Heart left ventricle (tissue), 16 donors: ENCODE measurements at regions of chr17 and their contacts with region 1.

Region 1: DNA sequence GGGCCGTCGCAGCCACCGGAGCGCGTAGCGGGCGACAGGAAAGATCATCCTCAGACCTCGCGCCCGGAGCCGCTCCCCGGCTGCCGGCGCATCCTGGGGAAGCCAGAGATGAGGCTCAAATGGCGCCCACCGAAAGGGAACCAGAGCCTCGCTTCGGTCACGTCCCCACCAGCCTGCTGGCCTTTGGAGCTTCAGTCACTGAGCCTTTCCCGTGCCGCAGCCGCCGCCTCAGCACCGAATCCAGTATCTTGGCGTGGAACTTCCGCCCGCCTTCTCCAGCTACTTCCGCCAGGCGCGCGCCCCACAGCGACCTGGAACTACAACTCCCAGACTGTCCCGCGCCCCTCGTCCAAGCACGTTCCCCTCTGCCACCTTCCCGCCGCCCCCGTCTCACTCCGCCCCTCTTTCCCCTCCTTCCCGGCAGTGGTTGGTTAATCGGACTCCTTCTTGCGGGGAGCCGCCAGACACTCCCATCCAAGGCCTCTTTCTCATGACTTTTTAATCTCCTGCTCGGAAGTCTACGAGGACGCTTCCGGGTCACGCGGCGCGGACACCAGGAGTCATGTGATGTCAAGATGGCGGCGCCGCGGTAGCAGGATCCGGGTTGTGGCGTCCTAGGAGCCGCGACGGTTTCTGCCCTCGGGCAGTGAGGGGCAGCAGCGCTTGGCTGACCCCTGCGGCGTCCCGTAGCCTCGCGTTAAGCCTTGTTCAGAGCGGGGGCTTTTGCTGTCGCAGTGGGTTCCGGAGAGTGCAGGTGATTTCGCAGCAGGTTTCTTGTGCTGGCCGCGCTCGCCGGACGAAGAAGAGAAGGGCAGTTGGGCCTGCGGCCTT is at the starts of genes SMCR8 and TOP3A:
- DNase-seq: peak; percentile 97 to 98 (median 98)
- ATAC-seq: peak; percentile 98
- H3K4me3 ChIP-seq: peak within 1 kb of the TSS; percentile 54 to 96 (median 87)
- H3K27ac ChIP-seq: peak within 1 kb of the TSS; percentile 26 to 95 (median 86)
- H3K4me1 ChIP-seq: peaks cover 11 to 73% (median 61%) of the 10 kb centered on the region in 12 donors
- H3K27me3 ChIP-seq: no peaks in the 10 kb centered on the region
- CTCF ChIP-seq: peak in 1 of 12 donors; percentile 6
- POLR2A ChIP-seq: peak in 1 of 2 donors; percentile 34
- total RNA-seq, gene SMCR8: 9.7 to 17.6 (median 13.1) TPM
- total RNA-seq, gene TOP3A: 9.4 to 26.1 (median 12.8) TPM

Region 2: DNA sequence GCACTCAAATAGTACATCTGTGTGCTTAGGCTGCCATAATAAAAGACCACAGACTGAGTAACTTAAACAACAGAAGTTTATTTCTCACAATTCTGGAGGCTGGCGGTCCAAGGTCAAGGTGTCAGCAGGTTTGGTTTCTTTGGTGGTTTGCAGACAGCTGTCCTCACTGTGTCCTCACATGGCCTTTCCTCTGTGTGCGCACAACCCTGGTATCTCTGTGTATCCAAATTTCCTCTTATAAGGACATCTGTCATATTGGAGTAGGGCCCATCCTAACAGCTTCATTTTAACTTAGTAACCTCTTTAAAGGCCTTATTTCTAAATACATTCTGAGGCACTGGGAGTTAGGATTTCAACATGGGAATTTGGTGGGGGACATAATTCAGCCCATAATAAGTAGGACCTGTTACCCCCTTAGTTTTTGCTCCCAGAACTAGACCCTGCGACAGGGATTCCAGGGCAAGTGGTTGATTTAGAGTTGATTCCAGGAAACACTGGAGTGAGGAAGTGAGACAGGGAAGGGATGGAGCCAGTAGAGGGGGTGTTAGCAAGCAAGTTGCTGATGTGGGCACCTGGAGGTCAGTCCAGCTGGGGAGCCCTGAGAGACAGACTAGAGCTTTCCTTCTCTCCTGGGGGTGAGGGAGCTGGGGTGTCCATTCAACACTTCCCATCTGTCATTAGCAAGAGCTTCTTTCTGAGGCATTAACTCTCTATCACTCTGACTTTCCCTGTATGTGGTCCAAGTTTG is 142.2 kb before region 1 on chr17:
- intact Hi-C with region 1: no loop called
- DNase-seq: no peak
- ATAC-seq: peak in 2 of 4 donors; percentile 61 to 71
- H3K4me3 ChIP-seq: no peak overlapping the region
- H3K27ac ChIP-seq: peak overlapping the region in 3 of 12 donors; percentile 8 to 46 (median 14)
- H3K4me1 ChIP-seq: peaks cover 0 to 7% (median 0%) of the 10 kb centered on the region in 12 donors
- H3K27me3 ChIP-seq: no peaks in the 10 kb centered on the region
- CTCF ChIP-seq: no peak
- POLR2A ChIP-seq: no peak

Region 3: DNA sequence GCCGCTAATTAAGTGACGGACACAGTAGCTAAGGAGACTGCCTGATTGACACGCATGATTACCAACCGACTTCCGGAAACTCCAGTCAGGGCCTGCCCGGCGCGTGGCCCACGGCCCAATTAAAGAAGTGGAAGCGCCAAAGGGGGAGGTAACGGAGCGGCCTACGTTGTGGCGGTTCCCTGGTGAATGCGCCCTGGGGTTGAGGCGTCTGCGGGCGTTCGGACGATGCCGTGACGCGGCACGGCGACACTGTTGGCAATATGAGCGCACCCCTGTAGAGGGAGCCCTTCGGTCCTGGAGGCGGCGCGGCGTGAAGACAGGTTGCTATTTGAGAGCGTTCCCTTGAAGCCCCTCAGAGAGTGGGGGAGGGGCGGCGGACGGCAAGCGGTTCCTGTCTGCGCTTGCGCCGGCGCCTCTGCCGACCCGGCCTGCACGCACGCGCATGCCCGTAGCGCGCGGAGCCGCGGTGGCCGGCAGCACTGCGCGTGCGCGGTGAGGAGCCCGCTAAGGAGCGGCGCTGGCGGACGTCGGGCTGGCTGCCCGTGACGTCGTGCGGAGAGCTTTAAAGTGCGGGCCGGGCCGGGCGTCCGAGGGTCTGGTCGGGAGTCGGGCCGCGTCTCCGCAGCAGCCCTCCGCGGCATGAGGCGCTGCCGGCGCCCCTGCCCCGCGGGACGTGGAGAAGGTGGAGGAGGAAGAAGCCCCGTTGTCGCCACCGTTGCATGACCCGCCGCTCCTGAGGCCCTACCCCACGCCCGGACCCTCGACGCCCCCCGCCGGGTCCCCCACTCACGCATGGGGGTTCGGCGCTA is 131.4 kb before region 1 on chr17 and contains the start of gene ALKBH5:
- intact Hi-C with region 1: loop called in 1 of 10 experiments (anchors 5 kb)
- DNase-seq: peak; percentile 97 to 99 (median 98)
- ATAC-seq: peak; percentile 91 to 96 (median 94)
- H3K4me3 ChIP-seq: peak within 1 kb of the TSS; percentile 56 to 99 (median 92)
- H3K27ac ChIP-seq: peak within 1 kb of the TSS; percentile 93 to 100 (median 98)
- H3K4me1 ChIP-seq: peaks cover 13 to 66% (median 47%) of the 10 kb centered on the region in 12 donors
- H3K27me3 ChIP-seq: no peaks in the 10 kb centered on the region
- CTCF ChIP-seq: peak in 11 of 12 donors; percentile 2 to 50 (median 28)
- POLR2A ChIP-seq: peak in 1 of 2 donors; percentile 94
- total RNA-seq, gene ALKBH5: 147 to 233 (median 198) TPM

Region 4: GRCh38 chr17:18217412-18218015 is 97.4 kb before region 1 on chr17:
- intact Hi-C with region 1: loop called in 6 of 10 experiments (anchors 5 to 10 kb)
- DNase-seq: peak; percentile 60 to 85 (median 74)
- ATAC-seq: peak; percentile 78 to 90 (median 88)
- H3K4me3 ChIP-seq: no peak overlapping the region
- H3K27ac ChIP-seq: no peak overlapping the region
- H3K4me1 ChIP-seq: peaks cover 0 to 15% (median 1%) of the 10 kb centered on the region in 12 donors
- H3K27me3 ChIP-seq: no peaks in the 10 kb centered on the region
- CTCF ChIP-seq: peak; percentile 86 to 92 (median 90)
- POLR2A ChIP-seq: no peak

Region 5: GRCh38 chr17:18225121-18225566 is 89.8 kb before region 1 on chr17:
- intact Hi-C with region 1: loop called in 4 of 10 experiments (anchors 5 to 10 kb)
- DNase-seq: peak; percentile 97 to 99 (median 98)
- ATAC-seq: peak; percentile 90 to 98 (median 97)
- H3K4me3 ChIP-seq: peak overlapping the region in 11 of 12 donors; percentile 5 to 87 (median 58)
- H3K27ac ChIP-seq: peak overlapping the region in 10 of 12 donors; percentile 27 to 80 (median 70)
- H3K4me1 ChIP-seq: peaks cover 0 to 25% (median 15%) of the 10 kb centered on the region in 12 donors
- H3K27me3 ChIP-seq: no peaks in the 10 kb centered on the region
- CTCF ChIP-seq: no peak
- POLR2A ChIP-seq: no peak

Region 6: GRCh38 chr17:18246880-18247612 is 67.9 kb before region 1 on chr17:
- intact Hi-C with region 1: loop called in 2 of 10 experiments (anchors 5 to 10 kb)
- DNase-seq: peak in 4 of 5 donors; percentile 47 to 67 (median 62)
- ATAC-seq: peak in 3 of 4 donors; percentile 33 to 62 (median 42)
- H3K4me3 ChIP-seq: no peak overlapping the region
- H3K27ac ChIP-seq: peak overlapping the region in 10 of 12 donors; percentile 24 to 88 (median 74)
- H3K4me1 ChIP-seq: peaks cover 0 to 28% (median 23%) of the 10 kb centered on the region in 12 donors
- H3K27me3 ChIP-seq: no peaks in the 10 kb centered on the region
- CTCF ChIP-seq: no peak
- POLR2A ChIP-seq: no peak

Region 7: GRCh38 chr17:18260332-18261144 is 54.4 kb before region 1 on chr17 and contains the start of gene MIEF2:
- intact Hi-C with region 1: loop called in 5 of 10 experiments (anchors 2 to 10 kb)
- DNase-seq: peak; percentile 97 to 98 (median 97)
- ATAC-seq: peak; percentile 82 to 87 (median 87)
- H3K4me3 ChIP-seq: peak within 1 kb of the TSS; percentile 58 to 94 (median 84)
- H3K27ac ChIP-seq: peak within 1 kb of the TSS; percentile 78 to 99 (median 95)
- H3K4me1 ChIP-seq: peaks cover 6 to 62% (median 50%) of the 10 kb centered on the region in 12 donors
- H3K27me3 ChIP-seq: no peaks in the 10 kb centered on the region
- CTCF ChIP-seq: no peak
- POLR2A ChIP-seq: peak; percentile 30 to 62
- total RNA-seq, gene MIEF2: 23.2 to 46.9 (median 26.7) TPM